ENCODE measurements at regions of chr3 and their contacts with region 1.

Region 1: GRCh38 chr3:197256836-197257444 is 41.5 kb downstream of the DLG1 start:
- DNase-seq: peak; percentile 24
- H3K4me3 ChIP-seq: no peak overlapping the region
- H3K27ac ChIP-seq: no peak overlapping the region
- H3K27me3 ChIP-seq: no peaks in the 10 kb centered on the region
- CTCF ChIP-seq: peak; percentile 68

Region 2: GRCh38 chr3:196604548-196604947 is 652.4 kb before region 1 on chr3:
- CTCF ChIA-PET with region 1: no interaction called
- POLR2A ChIA-PET with region 1: no interaction called
- DNase-seq: no peak
- H3K4me3 ChIP-seq: no peak overlapping the region
- H3K27ac ChIP-seq: no peak overlapping the region
- H3K27me3 ChIP-seq: peaks cover 6% of the 10 kb centered on the region
- CTCF ChIP-seq: no peak

Region 3: GRCh38 chr3:197224034-197224444 is 32.9 kb before region 1 on chr3:
- CTCF ChIA-PET with region 1: interaction called, 21 read pairs
- POLR2A ChIA-PET with region 1: no interaction called
- DNase-seq: peak; percentile 30
- H3K4me3 ChIP-seq: no peak overlapping the region
- H3K27ac ChIP-seq: no peak overlapping the region
- H3K27me3 ChIP-seq: no peaks in the 10 kb centered on the region
- CTCF ChIP-seq: peak; percentile 69

Region 4: DNA sequence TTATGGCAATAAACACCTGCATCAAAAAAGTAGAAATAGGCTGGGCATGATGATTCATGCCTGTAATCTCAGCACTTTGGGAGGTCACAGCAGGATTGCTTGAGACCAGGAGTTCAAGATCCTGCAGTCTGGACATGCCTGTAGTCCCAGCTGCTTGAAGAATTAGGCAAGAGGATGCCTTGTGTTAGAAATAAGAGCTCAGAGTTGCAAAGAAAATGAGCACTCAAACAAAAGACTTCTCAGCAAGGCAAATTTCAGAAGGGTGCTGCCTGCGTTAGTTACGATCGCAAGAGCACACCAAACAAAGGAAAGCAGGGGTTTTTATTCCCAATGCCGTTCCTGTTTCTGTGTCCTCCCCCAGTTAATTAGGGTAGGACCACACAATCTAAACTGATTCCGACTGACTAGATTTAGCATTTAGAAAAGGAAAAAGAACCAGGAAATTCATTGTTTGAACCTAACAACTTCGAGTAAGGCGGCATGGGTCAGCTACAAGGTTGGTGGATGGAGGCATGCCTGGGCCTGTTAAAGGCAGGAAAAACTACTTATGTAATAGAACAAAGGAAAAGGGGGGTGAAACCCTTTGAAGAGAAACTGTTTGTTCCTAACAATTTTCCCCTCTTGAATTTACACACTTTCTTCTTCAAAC is 14.0 kb before region 1 on chr3:
- CTCF ChIA-PET with region 1: interaction called, 18 read pairs
- POLR2A ChIA-PET with region 1: no interaction called
- DNase-seq: no peak
- H3K4me3 ChIP-seq: no peak overlapping the region
- H3K27ac ChIP-seq: no peak overlapping the region
- H3K27me3 ChIP-seq: no peaks in the 10 kb centered on the region
- CTCF ChIP-seq: no peak

Region 5: GRCh38 chr3:197286678-197287077 is 29.7 kb after region 1 on chr3:
- CTCF ChIA-PET with region 1: interaction called, 24 read pairs
- POLR2A ChIA-PET with region 1: no interaction called
- DNase-seq: no peak
- H3K4me3 ChIP-seq: no peak overlapping the region
- H3K27ac ChIP-seq: no peak overlapping the region
- H3K27me3 ChIP-seq: no peaks in the 10 kb centered on the region
- CTCF ChIP-seq: no peak

Region 6: DNA sequence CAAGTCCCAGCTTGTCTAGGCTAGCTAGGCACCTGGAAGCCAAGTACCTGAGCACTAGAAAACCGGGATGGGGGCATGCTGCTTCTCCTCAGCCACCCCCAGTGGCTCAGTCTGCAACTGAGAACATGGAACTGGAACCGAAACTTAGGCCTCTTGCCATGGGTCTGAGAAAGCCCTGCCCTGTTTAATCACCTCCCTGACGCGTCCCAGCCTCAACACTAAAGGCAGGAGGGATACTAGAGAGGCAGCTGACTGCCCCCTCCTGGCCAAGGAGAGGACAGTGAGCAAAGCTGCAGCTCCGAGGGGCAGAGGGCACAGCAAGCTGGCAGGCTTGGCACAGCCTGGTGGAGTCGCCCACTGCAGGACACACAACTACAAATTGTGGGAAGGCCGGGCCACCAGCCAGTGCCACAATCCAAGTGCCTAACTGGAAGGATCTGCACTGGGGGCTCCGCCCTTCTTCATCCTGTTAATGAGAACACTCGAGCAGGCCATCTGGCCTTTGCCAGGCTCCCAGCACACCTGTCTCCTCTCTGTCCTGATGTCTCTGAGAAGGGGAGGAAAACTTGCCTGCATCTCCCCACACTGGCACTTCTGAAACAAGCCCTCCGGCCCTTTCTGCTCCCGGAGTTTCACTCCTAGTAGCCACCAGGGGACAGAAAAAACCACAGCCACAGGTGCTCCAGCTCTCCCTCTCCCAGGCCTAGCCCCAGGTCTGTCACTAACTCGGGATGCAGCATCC is 245.1 kb after region 1 on chr3:
- CTCF ChIA-PET with region 1: interaction called, 27 read pairs
- POLR2A ChIA-PET with region 1: no interaction called
- DNase-seq: no peak
- H3K4me3 ChIP-seq: no peak overlapping the region
- H3K27ac ChIP-seq: no peak overlapping the region
- H3K27me3 ChIP-seq: peaks cover 2% of the 10 kb centered on the region
- CTCF ChIP-seq: peak; percentile 44

Region 7: DNA sequence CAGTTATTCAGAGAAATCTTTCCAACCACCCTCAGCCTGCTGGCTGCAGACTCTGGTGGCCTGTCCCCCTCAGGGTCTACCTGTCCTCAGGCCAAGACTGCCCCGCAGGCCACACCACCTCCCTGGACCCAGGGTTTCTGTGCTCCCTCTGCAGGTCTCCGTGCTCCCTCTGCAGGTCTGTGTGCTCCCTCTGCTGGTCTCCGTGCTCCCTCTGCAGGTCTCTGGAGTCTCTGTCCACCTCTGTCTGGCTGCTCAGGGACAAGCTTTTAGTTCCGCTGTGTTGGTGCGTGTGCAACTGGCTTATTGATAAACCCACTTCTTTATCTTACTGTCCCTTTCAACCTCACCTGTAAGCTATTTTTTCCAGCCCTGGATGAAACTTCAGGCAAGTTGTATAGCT is 268.8 kb after region 1 on chr3:
- CTCF ChIA-PET with region 1: interaction called, 11 read pairs
- POLR2A ChIA-PET with region 1: no interaction called
- DNase-seq: no peak
- H3K4me3 ChIP-seq: no peak overlapping the region
- H3K27ac ChIP-seq: no peak overlapping the region
- H3K27me3 ChIP-seq: no peaks in the 10 kb centered on the region
- CTCF ChIP-seq: 0 out of 2 replicates have a peak, but pooled peaks have one; percentile 28